ENCODE measurements at regions of chr15 and their contacts with region 1.

Region 1: DNA sequence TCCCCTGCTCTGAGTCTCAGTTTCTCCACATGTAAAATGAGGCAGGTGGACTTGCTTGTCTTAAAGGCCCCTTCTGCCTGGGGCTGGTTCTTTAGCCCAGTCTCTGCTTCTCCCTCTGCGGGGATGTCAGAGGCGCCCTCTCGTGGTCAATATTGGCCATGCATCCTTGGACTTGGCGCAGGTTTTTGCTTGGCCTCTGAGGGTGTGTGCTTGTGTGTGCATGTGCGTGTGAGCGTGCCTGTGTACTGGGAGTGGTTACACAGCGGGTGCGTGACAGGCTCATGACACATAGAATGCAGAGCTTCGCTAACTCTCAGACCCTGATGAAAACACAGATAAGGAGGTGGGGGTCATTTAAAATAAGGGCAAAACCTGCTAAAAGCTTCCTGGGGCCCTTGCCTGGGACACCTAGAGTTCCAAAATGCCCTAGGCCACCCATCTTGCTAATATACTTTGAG is 160.9 kb downstream of the SMAD6 start:
- DNase-seq: peak; percentile 78 to 87 (median 80)
- ATAC-seq: peak; percentile 72 to 89 (median 88)
- H3K4me3 ChIP-seq: no peak overlapping the region
- H3K27ac ChIP-seq: no peak overlapping the region
- H3K4me1 ChIP-seq: peaks cover 0 to 29% (median 12%) of the 10 kb centered on the region in 12 donors
- H3K27me3 ChIP-seq: no peaks in the 10 kb centered on the region
- CTCF ChIP-seq: peak; percentile 87 to 95 (median 92)
- POLR2A ChIP-seq: no peak

Region 2: GRCh38 chr15:66815322-66815721 is 47.6 kb before region 1 on chr15:
- intact Hi-C with region 1: no loop called
- DNase-seq: no peak
- ATAC-seq: no peak
- H3K4me3 ChIP-seq: no peak overlapping the region
- H3K27ac ChIP-seq: peak overlapping the region in 1 of 12 donors; percentile 16
- H3K4me1 ChIP-seq: peaks cover 0 to 2% (median 0%) of the 10 kb centered on the region in 12 donors
- H3K27me3 ChIP-seq: no peaks in the 10 kb centered on the region
- CTCF ChIP-seq: no peak
- POLR2A ChIP-seq: no peak

Region 3: DNA sequence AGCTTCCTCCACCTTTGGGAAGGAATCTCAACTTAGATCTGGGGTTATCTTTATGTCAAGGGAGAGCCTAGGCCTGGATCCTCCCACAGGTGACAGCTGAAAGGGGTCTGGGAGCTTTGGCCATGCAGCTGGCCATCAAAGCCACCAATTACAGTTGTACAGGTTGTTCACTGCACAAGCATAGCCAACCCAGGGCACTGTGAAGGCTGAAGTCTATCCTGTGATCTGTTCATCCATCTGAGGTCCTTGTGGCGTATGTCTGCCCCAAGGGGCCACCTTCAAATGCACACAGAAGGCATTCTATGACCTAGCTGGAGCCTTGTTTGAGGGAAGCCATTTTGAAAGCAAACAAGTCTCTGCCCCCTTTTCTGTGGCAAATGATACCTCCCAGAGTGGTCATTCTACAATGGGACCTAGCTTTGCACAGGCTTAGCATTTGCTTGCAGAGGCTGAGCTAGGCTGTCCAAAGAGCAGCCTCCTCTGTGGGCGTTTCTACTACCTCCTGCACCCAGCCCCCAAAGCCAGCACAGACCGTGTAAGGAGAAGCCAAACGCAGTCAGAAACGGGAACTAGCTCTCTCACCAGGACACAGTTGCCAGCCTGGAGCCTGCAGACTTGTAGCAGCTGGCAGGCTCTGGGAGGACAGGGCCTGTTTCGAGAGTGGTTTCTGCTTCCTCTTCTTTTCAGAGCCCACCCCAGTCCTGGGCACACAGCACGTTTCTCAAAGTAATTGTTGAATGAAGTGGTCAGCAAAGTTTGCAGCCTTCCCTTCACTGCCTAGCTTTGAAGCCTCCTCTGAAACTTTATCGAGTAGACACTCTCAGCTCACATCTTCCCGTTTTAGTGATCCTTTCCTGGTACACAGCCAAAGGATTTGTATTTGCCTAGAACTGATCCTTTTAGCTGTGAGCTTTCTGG is 45.2 kb after region 1 on chr15:
- intact Hi-C with region 1: loop called in 1 of 10 experiments (anchors 1 kb)
- DNase-seq: peak in 4 of 5 donors; percentile 49 to 82 (median 54)
- ATAC-seq: peak; percentile 49 to 82 (median 75)
- H3K4me3 ChIP-seq: no peak overlapping the region
- H3K27ac ChIP-seq: peak overlapping the region in 3 of 12 donors; percentile 52 to 73 (median 71)
- H3K4me1 ChIP-seq: peaks cover 0 to 34% (median 5%) of the 10 kb centered on the region in 12 donors
- H3K27me3 ChIP-seq: no peaks in the 10 kb centered on the region
- CTCF ChIP-seq: no peak
- POLR2A ChIP-seq: no peak

Measured in heart left ventricle (tissue), 16 donors.